ENCODE measurements at regions of chr15 and their contacts with region 1.

Region 1: DNA sequence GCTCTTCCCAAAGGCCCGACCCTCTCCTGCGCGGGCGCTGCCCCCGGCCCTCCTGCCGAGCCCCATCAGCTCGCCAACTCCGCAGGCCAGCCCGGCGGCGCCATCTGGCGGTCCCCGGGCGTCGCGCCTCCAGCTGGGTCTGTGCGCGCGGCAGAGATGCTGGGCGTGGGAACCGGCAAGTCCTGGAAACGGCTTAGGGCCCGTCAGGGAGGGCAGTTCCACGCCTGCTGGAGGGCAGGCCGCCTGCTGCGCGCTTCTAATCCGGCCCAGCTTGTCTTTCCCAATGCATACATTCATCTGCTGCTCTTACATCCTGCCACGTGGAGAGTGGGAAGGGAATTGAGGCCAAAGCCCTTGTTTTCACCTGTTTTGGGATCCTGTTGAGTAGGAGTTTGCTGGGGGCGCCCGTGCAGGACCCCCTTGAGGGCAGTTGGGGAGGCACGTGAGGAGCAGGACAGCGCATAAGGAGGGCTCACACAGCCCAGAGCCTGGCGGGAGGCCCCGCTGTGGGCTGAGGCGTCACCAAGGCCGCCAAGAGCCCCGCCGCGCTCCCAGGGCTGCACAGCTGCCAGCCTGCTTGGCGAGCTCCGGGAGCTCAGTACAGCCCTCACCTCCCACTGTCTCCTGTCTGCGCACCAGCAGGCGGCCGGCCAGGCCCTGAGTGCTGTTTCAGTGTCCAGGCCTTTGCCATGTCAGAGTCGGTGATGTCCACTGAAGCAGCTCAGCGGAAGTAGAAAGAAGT is 165.6 kb downstream of the NSMCE3 start:
- DNase-seq: peak; percentile 92
- H3K4me3 ChIP-seq: peak overlapping the region; percentile 47
- H3K27ac ChIP-seq: peak overlapping the region; percentile 45
- H3K4me1 ChIP-seq: peaks cover 18% of the 10 kb centered on the region
- H3K27me3 ChIP-seq: no peaks in the 10 kb centered on the region
- CTCF ChIP-seq: peak; percentile 94

Region 2: GRCh38 chr15:29090617-29091466 is 13.2 kb before region 1 on chr15:
- CTCF ChIA-PET with region 1: interaction called, 12 read pairs
- POLR2A ChIA-PET with region 1: no interaction called
- intact Hi-C with region 1: no loop called
- DNase-seq: peak; percentile 55
- H3K4me3 ChIP-seq: no peak overlapping the region
- H3K27ac ChIP-seq: no peak overlapping the region
- H3K4me1 ChIP-seq: no peaks in the 10 kb centered on the region
- H3K27me3 ChIP-seq: no peaks in the 10 kb centered on the region
- CTCF ChIP-seq: peak; percentile 86

Measured in A673 (cell line).